Endothelial cell of umbilical vein (primary cell): ENCODE measurements at regions of chr15 and their contacts with region 1.

Region 1: DNA sequence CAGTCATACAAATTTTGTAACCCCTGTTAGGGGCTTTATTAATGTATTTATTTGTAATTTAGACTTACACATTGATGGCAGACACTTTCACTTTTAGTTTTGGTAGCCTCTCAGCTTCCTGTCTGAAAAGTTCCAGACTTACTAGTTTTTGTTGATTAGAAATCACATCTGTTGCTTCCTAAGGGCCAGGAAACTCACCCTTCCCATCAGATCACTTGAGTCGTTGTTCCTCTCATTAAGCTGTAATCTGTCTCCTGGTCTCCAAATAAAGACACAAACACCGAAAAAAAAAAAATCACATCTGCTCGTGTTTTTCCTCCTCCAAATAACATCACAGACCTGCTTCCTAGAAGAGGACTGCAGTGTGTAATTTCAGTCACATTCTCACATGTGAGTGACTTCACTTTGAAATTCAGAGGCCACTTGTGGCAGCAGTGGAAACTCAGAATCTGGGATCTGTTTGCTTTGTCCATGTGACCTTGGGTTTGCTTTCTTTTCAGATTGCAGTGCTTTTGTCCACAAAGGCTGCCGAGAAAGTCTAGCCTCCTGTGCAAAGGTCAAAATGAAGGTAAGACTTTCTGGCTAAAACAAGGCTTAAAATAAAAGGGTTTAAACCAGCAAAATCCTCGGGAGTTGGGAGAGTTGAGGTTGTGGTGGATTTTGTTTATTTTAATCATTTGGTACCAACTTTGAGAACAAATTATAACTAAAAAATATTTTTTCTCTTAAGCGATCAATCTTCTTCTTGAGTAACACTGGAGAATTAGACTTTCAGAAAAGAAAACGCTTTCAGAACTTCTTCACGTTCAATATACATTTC is 87.0 kb downstream of the KLHL25 start:
- DNase-seq: peak; percentile 88
- H3K4me3 ChIP-seq: peak overlapping the region in 2 of 3 experiments; percentile 5 to 51
- H3K27ac ChIP-seq: peak overlapping the region; percentile 92
- H3K4me1 ChIP-seq: peaks cover 18% of the 10 kb centered on the region
- H3K27me3 ChIP-seq: no peaks in the 10 kb centered on the region
- CTCF ChIP-seq: no peak
- POLR2A ChIP-seq: no peak

Region 2: GRCh38 chr15:85482894-85483293 is 224.8 kb before region 1 on chr15:
- CTCF ChIA-PET with region 1: no interaction called
- POLR2A ChIA-PET with region 1: no interaction called
- dilution Hi-C with region 1: no loop called
- intact Hi-C with region 1: no loop called
- DNase-seq: no peak
- H3K4me3 ChIP-seq: no peak overlapping the region
- H3K27ac ChIP-seq: no peak overlapping the region
- H3K4me1 ChIP-seq: peaks cover 22% of the 10 kb centered on the region
- H3K27me3 ChIP-seq: no peaks in the 10 kb centered on the region
- CTCF ChIP-seq: no peak
- POLR2A ChIP-seq: no peak

Region 3: GRCh38 chr15:85494048-85494793 is 213.5 kb before region 1 on chr15:
- CTCF ChIA-PET with region 1: no interaction called
- POLR2A ChIA-PET with region 1: no interaction called
- dilution Hi-C with region 1: no loop called
- intact Hi-C with region 1: loop called (anchors 10 kb)
- DNase-seq: peak; percentile 76
- H3K4me3 ChIP-seq: no peak overlapping the region
- H3K27ac ChIP-seq: peak overlapping the region; percentile 27
- H3K4me1 ChIP-seq: peaks cover 12% of the 10 kb centered on the region
- H3K27me3 ChIP-seq: no peaks in the 10 kb centered on the region
- CTCF ChIP-seq: no peak
- POLR2A ChIP-seq: no peak

Region 4: GRCh38 chr15:85750319-85750806 is 42.6 kb after region 1 on chr15:
- CTCF ChIA-PET with region 1: no interaction called
- POLR2A ChIA-PET with region 1: no interaction called
- dilution Hi-C with region 1: no loop called
- intact Hi-C with region 1: no loop called
- DNase-seq: no peak
- H3K4me3 ChIP-seq: no peak overlapping the region
- H3K27ac ChIP-seq: no peak overlapping the region
- H3K4me1 ChIP-seq: no peaks in the 10 kb centered on the region
- H3K27me3 ChIP-seq: no peaks in the 10 kb centered on the region
- CTCF ChIP-seq: no peak
- POLR2A ChIP-seq: no peak

Region 5: GRCh38 chr15:85785887-85786780 is 78.4 kb after region 1 on chr15:
- CTCF ChIA-PET with region 1: no interaction called
- POLR2A ChIA-PET with region 1: no interaction called
- dilution Hi-C with region 1: no loop called
- intact Hi-C with region 1: no loop called
- DNase-seq: peak; percentile 28
- H3K4me3 ChIP-seq: no peak overlapping the region
- H3K27ac ChIP-seq: no peak overlapping the region
- H3K4me1 ChIP-seq: peaks cover 8% of the 10 kb centered on the region
- H3K27me3 ChIP-seq: no peaks in the 10 kb centered on the region
- CTCF ChIP-seq: no peak
- POLR2A ChIP-seq: no peak